ENCODE measurements at regions of chr2 and their contacts with region 1.

Region 1: DNA sequence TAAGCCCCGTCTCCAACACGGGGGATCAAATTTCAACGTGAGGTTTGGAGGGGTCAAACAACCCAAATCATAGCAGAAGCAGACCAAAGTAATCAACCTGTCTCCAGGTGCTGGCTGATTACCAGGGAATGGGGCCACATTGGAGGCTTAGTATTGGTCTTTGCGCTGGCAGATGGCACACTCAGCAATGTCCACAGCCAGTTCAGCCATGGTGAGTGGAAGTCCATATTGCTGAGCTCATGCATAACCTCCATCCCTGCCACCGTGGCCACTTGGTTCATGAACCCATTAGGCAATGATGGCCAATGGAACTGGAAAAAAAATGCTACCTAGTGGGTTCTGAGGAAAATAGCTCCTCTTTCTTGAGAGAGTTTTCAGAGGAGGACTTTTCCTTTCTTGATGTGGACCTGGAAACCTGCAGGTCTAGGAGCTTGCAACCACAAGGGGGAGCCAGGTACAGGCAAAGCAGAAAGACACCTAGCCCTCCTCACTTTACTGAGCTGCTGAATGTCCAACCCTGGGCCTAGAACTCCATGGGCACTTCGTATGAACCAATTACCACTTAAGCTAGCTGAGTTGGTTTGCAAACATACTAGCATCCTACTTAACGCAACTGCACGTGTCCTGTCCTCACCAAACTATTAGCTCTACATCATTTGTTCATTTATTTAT is 128.0 kb upstream of the GYPC start:
- DNase-seq: peak; percentile 59
- CTCF ChIP-seq: peak; percentile 68

Region 2: DNA sequence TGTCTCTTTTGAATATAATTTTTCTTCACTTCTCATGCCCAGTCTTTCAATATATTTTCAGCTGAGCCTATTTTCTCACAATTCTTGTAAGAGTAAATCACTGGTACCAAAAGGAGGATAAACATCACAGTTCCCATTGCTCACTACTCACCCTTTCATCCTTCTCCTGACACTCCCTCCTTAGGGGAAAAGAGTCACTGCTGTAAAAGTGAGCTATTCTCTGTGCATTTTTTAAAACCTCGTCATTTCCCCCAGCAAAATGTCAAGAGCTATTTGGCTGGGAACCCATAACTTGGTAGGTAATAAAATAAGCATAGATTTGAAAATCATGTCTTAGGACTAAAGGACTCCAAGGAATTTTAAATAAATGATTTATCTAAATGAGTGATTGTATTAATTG is 212.1 kb before region 1 on chr2:
- CTCF ChIA-PET with region 1: no interaction called
- POLR2A ChIA-PET with region 1: no interaction called
- DNase-seq: no peak
- CTCF ChIP-seq: no peak

Region 3: DNA sequence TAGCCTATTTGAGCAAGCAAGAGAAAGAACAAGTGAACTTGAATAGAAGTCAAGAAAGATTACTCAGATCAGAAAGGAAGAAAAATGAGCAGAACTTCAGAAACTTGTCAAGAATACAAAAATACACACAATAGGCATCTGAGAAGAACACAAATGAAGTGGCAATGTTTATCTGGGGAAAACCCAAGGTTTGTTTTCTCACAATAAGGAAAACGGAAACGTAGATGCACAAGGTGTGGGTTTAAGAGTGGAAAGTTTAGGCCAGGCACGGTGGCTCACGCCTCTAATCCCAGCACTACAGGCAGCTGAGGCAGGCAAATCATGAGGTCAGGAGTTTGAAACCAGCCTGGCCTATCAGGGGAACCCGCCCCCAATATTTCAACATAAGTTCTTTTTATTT is 31.5 kb before region 1 on chr2:
- CTCF ChIA-PET with region 1: interaction called, 16 read pairs
- POLR2A ChIA-PET with region 1: no interaction called
- DNase-seq: peak; percentile 52
- CTCF ChIP-seq: no peak

Region 4: GRCh38 chr2:126749537-126749936 is 221.6 kb after region 1 on chr2:
- CTCF ChIA-PET with region 1: interaction called, 30 read pairs
- POLR2A ChIA-PET with region 1: no interaction called
- DNase-seq: no peak
- CTCF ChIP-seq: no peak

Region 5: GRCh38 chr2:126776692-126777619 is 249.0 kb after region 1 on chr2:
- CTCF ChIA-PET with region 1: interaction called, 88 read pairs
- POLR2A ChIA-PET with region 1: no interaction called
- DNase-seq: peak; percentile 81
- CTCF ChIP-seq: peak; percentile 95